ENCODE measurements at regions of chr7 and their contacts with region 1.

Region 1: DNA sequence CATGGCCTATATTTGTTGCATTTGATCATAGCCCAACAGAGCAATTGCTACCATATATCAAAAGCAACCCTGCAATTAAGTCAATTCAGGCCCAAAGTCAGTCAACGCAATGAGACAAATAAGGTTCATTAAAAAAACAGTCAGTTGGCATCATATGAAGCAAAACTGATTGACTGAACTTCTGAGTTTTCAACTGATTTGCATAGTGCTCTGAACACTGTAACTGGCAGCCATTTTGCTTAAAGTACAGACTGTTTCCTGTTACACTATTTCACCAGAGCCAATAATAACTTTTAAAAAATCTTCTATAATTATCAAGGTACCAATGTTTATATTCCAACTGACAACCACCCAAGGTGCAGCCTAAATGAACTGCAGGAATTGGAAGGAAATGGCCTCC is 68.4 kb upstream of the RAPGEF5 start:
- DNase-seq: no peak
- ATAC-seq: peak; percentile 49
- H3K4me3 Mint-ChIP-seq: no peak overlapping the region
- H3K27ac Mint-ChIP-seq: peak overlapping the region; percentile 37
- H3K4me1 Mint-ChIP-seq: peaks cover 26% of the 10 kb centered on the region
- H3K27me3 Mint-ChIP-seq: no peaks in the 10 kb centered on the region
- CTCF ChIP-seq: no peak

Region 2: GRCh38 chr7:21330462-21331178 is 1094.7 kb before region 1 on chr7:
- CTCF ChIA-PET with region 1: no interaction called
- POLR2A ChIA-PET with region 1: no interaction called
- intact Hi-C with region 1: no loop called
- DNase-seq: no peak
- ATAC-seq: no peak
- H3K4me3 Mint-ChIP-seq: no peak overlapping the region
- H3K27ac Mint-ChIP-seq: no peak overlapping the region
- H3K4me1 Mint-ChIP-seq: no peaks in the 10 kb centered on the region
- H3K27me3 Mint-ChIP-seq: no peaks in the 10 kb centered on the region
- CTCF ChIP-seq: no peak

Region 3: GRCh38 chr7:22445140-22445743 is 19.9 kb after region 1 on chr7:
- CTCF ChIA-PET with region 1: no interaction called
- POLR2A ChIA-PET with region 1: no interaction called
- intact Hi-C with region 1: loop called (anchors 2 kb)
- DNase-seq: no peak
- ATAC-seq: peak; percentile 26
- H3K4me3 Mint-ChIP-seq: peak overlapping the region; percentile 60
- H3K27ac Mint-ChIP-seq: peak overlapping the region; percentile 87
- H3K4me1 Mint-ChIP-seq: peaks cover 69% of the 10 kb centered on the region
- H3K27me3 Mint-ChIP-seq: no peaks in the 10 kb centered on the region
- CTCF ChIP-seq: no peak

Region 4: DNA sequence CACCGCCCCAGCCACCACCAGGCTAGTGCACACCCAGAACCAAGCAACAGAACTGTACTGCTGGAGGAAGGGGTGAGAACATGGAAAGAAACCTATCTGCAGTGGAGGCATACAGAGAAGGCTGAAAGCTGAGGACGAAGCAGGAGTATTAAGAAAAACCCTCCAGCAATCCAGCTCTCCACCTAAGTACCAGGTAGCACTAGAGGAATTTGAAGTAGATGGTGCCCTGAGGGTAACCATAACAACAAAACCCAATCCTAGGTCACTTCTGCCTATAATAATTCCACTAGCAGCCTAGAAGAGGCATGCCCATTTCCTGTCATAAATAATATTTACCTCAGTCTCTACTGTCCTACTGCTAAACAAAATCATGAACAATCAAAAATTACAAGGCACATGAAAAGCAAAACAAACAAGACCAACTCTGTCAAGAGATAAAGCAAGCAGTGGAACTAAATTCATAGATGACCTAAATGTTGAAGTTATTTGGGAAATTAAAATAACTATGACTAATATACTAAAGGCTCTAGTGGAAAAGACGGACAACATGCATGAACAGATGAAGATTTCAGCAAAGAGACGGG is 537.5 kb after region 1 on chr7:
- CTCF ChIA-PET with region 1: no interaction called
- POLR2A ChIA-PET with region 1: no interaction called
- intact Hi-C with region 1: no loop called
- DNase-seq: no peak
- ATAC-seq: no peak
- H3K4me3 Mint-ChIP-seq: no peak overlapping the region
- H3K27ac Mint-ChIP-seq: no peak overlapping the region
- H3K4me1 Mint-ChIP-seq: peaks cover 9% of the 10 kb centered on the region
- H3K27me3 Mint-ChIP-seq: no peaks in the 10 kb centered on the region
- CTCF ChIP-seq: no peak

Measured in activated B cell treated with CpG ODN at 0.5 μM for 24 hours (primary cell).